MCF 10A (cell line): ENCODE measurements at regions of chr5 and their contacts with region 1.

Region 1: DNA sequence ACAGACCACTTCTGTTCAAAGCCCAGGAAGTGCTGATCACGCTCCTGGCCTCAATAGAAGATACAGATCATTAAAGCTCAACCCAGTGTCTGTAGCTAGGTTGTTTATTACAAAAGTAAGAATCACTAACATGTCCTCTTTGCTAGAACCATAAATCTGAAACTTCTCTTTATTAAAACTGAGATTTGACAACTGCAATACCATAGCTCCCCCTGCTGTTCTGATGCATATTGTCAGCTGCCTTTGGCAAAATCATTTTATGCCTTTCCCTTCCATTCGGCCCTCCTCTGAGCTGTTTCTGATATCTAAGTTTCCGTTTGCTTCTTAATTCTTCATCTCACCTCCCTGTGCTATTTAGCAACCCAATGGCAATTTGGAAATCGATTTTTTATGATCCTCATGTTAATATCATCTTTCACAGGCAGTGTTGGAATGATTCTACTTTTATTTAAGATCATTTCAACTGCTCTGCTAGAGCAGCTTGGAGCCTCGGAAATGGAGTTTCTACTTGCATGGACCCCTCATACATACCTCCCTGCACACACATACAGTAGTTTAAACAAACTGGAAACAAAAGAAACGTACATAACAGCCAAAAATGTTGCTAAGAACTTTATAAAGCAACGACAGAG is 998.8 kb downstream of the MAT2B start:
- DNase-seq: peak; percentile 81
- H3K4me3 Mint-ChIP-seq: no peak overlapping the region
- H3K27ac Mint-ChIP-seq: peak overlapping the region; percentile 61
- H3K4me1 Mint-ChIP-seq: peaks cover 10% of the 10 kb centered on the region
- H3K27me3 Mint-ChIP-seq: no peaks in the 10 kb centered on the region
- CTCF ChIP-seq: peak; percentile 95

Region 2: GRCh38 chr5:163677084-163677483 is 827.2 kb before region 1 on chr5:
- CTCF ChIA-PET with region 1: interaction called, 10 read pairs
- POLR2A ChIA-PET with region 1: no interaction called
- intact Hi-C with region 1: no loop called
- DNase-seq: peak; percentile 32
- H3K4me3 Mint-ChIP-seq: no peak overlapping the region
- H3K27ac Mint-ChIP-seq: no peak overlapping the region
- H3K4me1 Mint-ChIP-seq: peaks cover 1% of the 10 kb centered on the region
- H3K27me3 Mint-ChIP-seq: no peaks in the 10 kb centered on the region
- CTCF ChIP-seq: no peak

Region 3: GRCh38 chr5:164020116-164020515 is 484.1 kb before region 1 on chr5:
- CTCF ChIA-PET with region 1: interaction called, 89 read pairs
- POLR2A ChIA-PET with region 1: interaction called, 3 read pairs
- intact Hi-C with region 1: no loop called
- DNase-seq: no peak
- H3K4me3 Mint-ChIP-seq: no peak overlapping the region
- H3K27ac Mint-ChIP-seq: no peak overlapping the region
- H3K4me1 Mint-ChIP-seq: no peaks in the 10 kb centered on the region
- H3K27me3 Mint-ChIP-seq: no peaks in the 10 kb centered on the region
- CTCF ChIP-seq: no peak

Region 4: GRCh38 chr5:164475339-164475977 is 28.8 kb before region 1 on chr5:
- CTCF ChIA-PET with region 1: interaction called, 48 read pairs
- POLR2A ChIA-PET with region 1: no interaction called
- intact Hi-C with region 1: no loop called
- DNase-seq: peak; percentile 70
- H3K4me3 Mint-ChIP-seq: no peak overlapping the region
- H3K27ac Mint-ChIP-seq: no peak overlapping the region
- H3K4me1 Mint-ChIP-seq: no peaks in the 10 kb centered on the region
- H3K27me3 Mint-ChIP-seq: no peaks in the 10 kb centered on the region
- CTCF ChIP-seq: peak; percentile 97

Region 5: GRCh38 chr5:164532235-164532900 is 28.1 kb after region 1 on chr5:
- CTCF ChIA-PET with region 1: interaction called, 19 read pairs
- POLR2A ChIA-PET with region 1: interaction called, 6 read pairs
- intact Hi-C with region 1: no loop called
- DNase-seq: peak; percentile 38
- H3K4me3 Mint-ChIP-seq: no peak overlapping the region
- H3K27ac Mint-ChIP-seq: peak overlapping the region; percentile 87
- H3K4me1 Mint-ChIP-seq: peaks cover 28% of the 10 kb centered on the region
- H3K27me3 Mint-ChIP-seq: no peaks in the 10 kb centered on the region
- CTCF ChIP-seq: no peak

Region 6: DNA sequence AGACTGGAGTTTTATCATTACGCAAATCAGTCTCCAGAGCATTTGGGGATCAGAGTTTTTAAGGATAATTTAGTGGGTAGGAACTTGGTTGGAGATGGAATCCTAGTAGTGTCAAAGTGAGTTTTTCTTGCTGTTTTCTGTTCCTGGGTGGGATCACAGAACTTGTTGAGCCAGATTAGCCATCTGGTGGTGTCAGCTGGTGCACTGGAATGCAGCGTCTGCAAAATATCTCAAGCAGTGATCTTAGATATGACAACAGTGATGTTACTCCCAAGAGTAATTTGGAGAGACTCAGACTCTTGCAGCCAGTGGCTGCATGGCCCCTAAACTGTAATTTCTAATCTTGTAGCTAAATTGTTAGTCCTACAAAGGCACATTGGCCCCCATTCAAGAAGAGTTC is 258.9 kb after region 1 on chr5:
- CTCF ChIA-PET with region 1: no interaction called
- POLR2A ChIA-PET with region 1: no interaction called
- intact Hi-C with region 1: no loop called
- DNase-seq: no peak
- H3K4me3 Mint-ChIP-seq: no peak overlapping the region
- H3K27ac Mint-ChIP-seq: no peak overlapping the region
- H3K4me1 Mint-ChIP-seq: peaks cover 6% of the 10 kb centered on the region
- H3K27me3 Mint-ChIP-seq: no peaks in the 10 kb centered on the region
- CTCF ChIP-seq: no peak